ENCODE measurements at regions of chr14 and their contacts with region 1.

Region 1: GRCh38 chr14:65321370-65321875 is 91.1 kb upstream of the FUT8 start:
- DNase-seq: no peak
- H3K4me3 Mint-ChIP-seq: no peak overlapping the region
- H3K27ac Mint-ChIP-seq: peak overlapping the region; percentile 86
- H3K4me1 Mint-ChIP-seq: peaks cover 64% of the 10 kb centered on the region
- H3K27me3 Mint-ChIP-seq: no peaks in the 10 kb centered on the region

Region 2: GRCh38 chr14:65255536-65256461 is 65.6 kb before region 1 on chr14:
- CTCF ChIA-PET with region 1: no interaction called
- POLR2A ChIA-PET with region 1: no interaction called
- DNase-seq: peak; percentile 13
- H3K4me3 Mint-ChIP-seq: no peak overlapping the region
- H3K27ac Mint-ChIP-seq: no peak overlapping the region
- H3K4me1 Mint-ChIP-seq: peaks cover 17% of the 10 kb centered on the region
- H3K27me3 Mint-ChIP-seq: peaks cover 7% of the 10 kb centered on the region

Region 3: DNA sequence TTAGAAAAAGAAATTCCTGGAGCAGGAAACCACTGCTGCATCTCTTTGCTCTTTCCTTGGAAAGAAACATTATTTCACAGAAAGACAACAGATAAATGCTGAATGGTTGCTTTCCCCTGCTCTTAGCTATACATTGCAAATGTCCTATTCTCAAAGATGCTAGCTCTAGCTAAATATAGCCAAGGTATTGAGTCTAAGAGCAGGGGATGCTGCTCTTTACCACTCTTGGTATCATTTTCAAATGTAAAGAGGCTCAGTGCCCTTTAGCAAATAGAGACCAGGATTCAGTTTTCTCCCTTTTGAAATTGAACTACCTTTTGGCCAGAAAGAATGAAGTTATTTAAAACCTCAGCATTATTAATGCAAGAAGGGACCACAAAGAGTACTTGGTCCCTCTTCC is 12.9 kb before region 1 on chr14:
- CTCF ChIA-PET with region 1: interaction called, 14 read pairs
- POLR2A ChIA-PET with region 1: no interaction called
- DNase-seq: no peak
- H3K4me3 Mint-ChIP-seq: no peak overlapping the region
- H3K27ac Mint-ChIP-seq: no peak overlapping the region
- H3K4me1 Mint-ChIP-seq: peaks cover 26% of the 10 kb centered on the region
- H3K27me3 Mint-ChIP-seq: no peaks in the 10 kb centered on the region

Region 4: GRCh38 chr14:65336191-65336591 is 14.8 kb after region 1 on chr14:
- CTCF ChIA-PET with region 1: interaction called, 12 read pairs
- POLR2A ChIA-PET with region 1: no interaction called
- DNase-seq: peak; percentile 60
- H3K4me3 Mint-ChIP-seq: peak overlapping the region; percentile 65
- H3K27ac Mint-ChIP-seq: peak overlapping the region; percentile 92
- H3K4me1 Mint-ChIP-seq: peaks cover 71% of the 10 kb centered on the region
- H3K27me3 Mint-ChIP-seq: no peaks in the 10 kb centered on the region

Region 5: GRCh38 chr14:65446159-65446558 is 124.7 kb after region 1 on chr14:
- CTCF ChIA-PET with region 1: no interaction called
- POLR2A ChIA-PET with region 1: interaction called, 10 read pairs
- DNase-seq: no peak
- H3K4me3 Mint-ChIP-seq: no peak overlapping the region
- H3K27ac Mint-ChIP-seq: no peak overlapping the region
- H3K4me1 Mint-ChIP-seq: peaks cover 24% of the 10 kb centered on the region
- H3K27me3 Mint-ChIP-seq: no peaks in the 10 kb centered on the region

Region 6: GRCh38 chr14:65565948-65566347 is 244.5 kb after region 1 on chr14:
- CTCF ChIA-PET with region 1: no interaction called
- POLR2A ChIA-PET with region 1: no interaction called
- DNase-seq: no peak
- H3K4me3 Mint-ChIP-seq: no peak overlapping the region
- H3K27ac Mint-ChIP-seq: no peak overlapping the region
- H3K4me1 Mint-ChIP-seq: peaks cover 25% of the 10 kb centered on the region
- H3K27me3 Mint-ChIP-seq: no peaks in the 10 kb centered on the region